ENCODE measurements at regions of chr3 and their contacts with region 1.

Region 1: GRCh38 chr3:156174229-156174847 is 54.0 kb downstream of the KCNAB1 start:
- DNase-seq: no peak

Region 2: DNA sequence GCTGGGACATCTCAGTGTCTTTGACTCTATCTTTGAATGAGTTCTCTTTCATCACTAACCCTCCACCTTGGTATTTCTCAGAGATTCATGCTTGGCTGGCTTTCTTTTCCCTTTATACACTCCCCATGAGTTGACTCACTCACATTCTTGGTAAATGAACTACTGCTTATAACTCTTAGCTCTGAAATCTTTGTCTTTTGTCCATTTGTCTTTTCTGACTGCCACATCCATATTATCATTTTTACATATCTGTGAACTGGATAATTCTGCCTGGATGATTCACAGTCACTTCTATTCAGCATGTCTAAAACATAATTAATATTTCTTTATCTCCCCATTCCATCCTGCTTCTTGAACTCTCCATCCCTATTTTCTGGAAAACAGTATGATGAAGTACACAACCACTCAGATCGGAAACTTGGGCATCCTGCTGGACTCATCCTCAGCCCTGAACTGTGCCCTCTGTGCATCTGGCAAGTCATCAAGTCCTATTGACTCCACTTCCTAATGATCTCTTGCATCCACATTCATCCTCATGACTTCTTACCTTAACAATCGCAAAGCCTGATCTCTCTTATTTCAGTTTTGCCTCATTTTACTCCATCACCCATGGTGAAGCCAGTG is 12.9 kb after region 1 on chr3:
- intact Hi-C with region 1: loop called in 1 of 2 experiments (anchors 2 kb)
- DNase-seq: no peak

Region 3: DNA sequence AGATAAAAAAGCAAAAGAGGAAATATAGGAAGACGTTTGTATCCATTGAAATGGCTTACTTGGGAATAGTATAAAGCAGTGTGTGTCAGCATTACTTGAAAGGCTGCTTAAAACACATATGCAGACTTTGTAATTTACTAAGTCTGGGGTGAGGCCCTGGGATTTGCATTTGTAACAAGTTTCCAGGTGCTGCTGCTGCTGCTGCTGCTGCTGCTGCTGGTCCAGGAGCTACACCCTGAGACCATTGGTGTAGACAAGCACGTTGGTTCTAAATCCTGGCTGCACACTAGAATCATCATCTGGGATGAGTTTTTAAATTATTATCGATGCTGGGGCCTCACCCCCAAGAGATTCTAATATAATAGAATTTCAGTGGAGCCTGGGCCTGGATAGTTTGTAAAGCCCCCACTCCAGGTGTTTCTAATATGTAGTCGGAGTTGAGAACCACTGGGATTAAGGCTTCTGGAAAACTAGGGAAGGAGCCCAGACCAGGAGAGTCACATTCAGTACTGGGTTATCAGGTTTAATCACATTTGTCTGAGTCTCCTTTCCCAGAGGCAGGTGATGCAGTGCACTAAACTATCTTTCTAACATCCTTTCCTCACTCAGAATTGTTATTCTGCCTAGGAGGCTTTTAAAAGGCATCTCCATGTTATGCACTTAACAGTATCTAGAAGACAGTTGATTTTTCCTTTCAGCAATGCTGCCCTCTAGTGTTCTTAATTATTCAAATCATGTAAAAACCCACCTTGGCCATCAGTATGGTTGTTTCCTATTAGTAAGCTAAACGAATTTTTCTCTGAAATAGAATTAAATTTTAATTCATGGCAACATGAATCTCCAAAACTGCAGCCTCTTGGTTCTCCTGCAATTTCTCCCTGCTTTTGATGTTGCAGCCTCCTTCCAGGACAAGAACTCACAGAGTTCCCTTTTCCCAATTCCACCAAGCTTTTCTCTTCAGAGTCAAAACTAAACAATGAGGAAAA is 335.1 kb after region 1 on chr3:
- intact Hi-C with region 1: loop called in 1 of 2 experiments (anchors 2 kb)
- DNase-seq: no peak